Activated naive CD4-positive, alpha-beta T cell treated with anti-CD3 and anti-CD28 coated beads for 36 hours (primary cell): ENCODE measurements at regions of chr14 and their contacts with region 1.

Region 1: DNA sequence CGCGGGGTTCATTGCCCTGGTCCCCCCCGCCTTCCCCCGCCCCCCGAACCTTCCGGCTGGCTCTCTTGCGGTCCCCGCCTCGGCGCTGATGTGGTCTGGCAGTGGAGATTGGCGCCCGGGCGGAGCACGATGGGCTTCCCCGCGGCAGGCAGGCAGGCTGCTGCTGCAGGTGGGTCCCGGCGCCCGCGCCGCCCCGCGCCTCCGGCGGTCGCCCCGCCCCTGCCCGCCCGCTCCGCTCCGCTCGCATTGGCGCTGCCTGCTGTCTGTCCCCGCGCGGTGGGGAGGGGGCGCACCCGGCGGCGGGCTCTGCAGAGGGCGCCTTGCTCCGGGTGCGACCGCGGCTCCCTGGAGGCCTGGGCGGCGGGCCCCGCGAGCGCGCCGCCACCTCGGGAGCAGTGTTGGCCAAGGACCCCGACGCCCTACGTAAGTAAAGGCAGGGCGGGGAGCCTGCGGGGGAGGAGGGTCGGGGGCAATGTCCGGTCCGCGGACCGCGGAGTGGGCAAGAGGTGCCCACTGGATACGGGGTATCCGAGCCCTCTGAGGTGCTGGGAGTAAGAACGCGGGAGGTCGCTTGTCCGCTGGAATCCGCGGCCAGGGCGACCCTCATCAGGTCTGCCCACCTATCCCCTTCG is at the start of gene AKAP5:
- DNase-seq: peak; percentile 68
- H3K4me3 Mint-ChIP-seq: peak within 1 kb of the TSS; percentile 79
- H3K27ac Mint-ChIP-seq: peak within 1 kb of the TSS; percentile 46
- H3K4me1 Mint-ChIP-seq: peaks cover 37% of the 10 kb centered on the region
- H3K27me3 Mint-ChIP-seq: no peaks in the 10 kb centered on the region
- total RNA-seq, gene AKAP5: 0.57 to 0.69 TPM

Region 2: GRCh38 chr14:63981569-63981968 is 483.7 kb before region 1 on chr14:
- CTCF ChIA-PET with region 1: no interaction called
- intact Hi-C with region 1: no loop called
- DNase-seq: no peak
- H3K4me3 Mint-ChIP-seq: no peak overlapping the region
- H3K27ac Mint-ChIP-seq: no peak overlapping the region
- H3K4me1 Mint-ChIP-seq: no peaks in the 10 kb centered on the region
- H3K27me3 Mint-ChIP-seq: no peaks in the 10 kb centered on the region

Region 3: GRCh38 chr14:64387694-64388532 is 77.4 kb before region 1 on chr14 and contains the start of gene MTHFD1:
- CTCF ChIA-PET with region 1: no interaction called
- intact Hi-C with region 1: loop called (anchors 2 kb)
- DNase-seq: peak; percentile 99
- H3K4me3 Mint-ChIP-seq: peak within 1 kb of the TSS; percentile 92
- H3K27ac Mint-ChIP-seq: peak within 1 kb of the TSS; percentile 94
- H3K4me1 Mint-ChIP-seq: peaks cover 26% of the 10 kb centered on the region
- H3K27me3 Mint-ChIP-seq: no peaks in the 10 kb centered on the region
- total RNA-seq, gene MTHFD1: 240 to 247 TPM

Region 4: GRCh38 chr14:64444984-64445845 is 20.1 kb before region 1 on chr14:
- CTCF ChIA-PET with region 1: interaction called, 3 read pairs
- intact Hi-C with region 1: loop called (anchors 1 kb)
- DNase-seq: peak; percentile 55
- H3K4me3 Mint-ChIP-seq: no peak overlapping the region
- H3K27ac Mint-ChIP-seq: peak overlapping the region; percentile 75
- H3K4me1 Mint-ChIP-seq: peaks cover 32% of the 10 kb centered on the region
- H3K27me3 Mint-ChIP-seq: no peaks in the 10 kb centered on the region

Region 5: GRCh38 chr14:64510825-64511671 is 45.7 kb after region 1 on chr14:
- CTCF ChIA-PET with region 1: interaction called, 13 read pairs
- intact Hi-C with region 1: no loop called
- DNase-seq: peak; percentile 82
- H3K4me3 Mint-ChIP-seq: peak overlapping the region; percentile 34
- H3K27ac Mint-ChIP-seq: peak overlapping the region; percentile 57
- H3K4me1 Mint-ChIP-seq: peaks cover 75% of the 10 kb centered on the region
- H3K27me3 Mint-ChIP-seq: no peaks in the 10 kb centered on the region

Region 6: GRCh38 chr14:64540208-64541157 is 75.2 kb after region 1 on chr14 and contains the start of gene HSPA2:
- CTCF ChIA-PET with region 1: interaction called, 4 read pairs
- intact Hi-C with region 1: loop called (anchors 2 kb)
- DNase-seq: peak; percentile 97
- H3K4me3 Mint-ChIP-seq: peak within 1 kb of the TSS; percentile 92
- H3K27ac Mint-ChIP-seq: peak within 1 kb of the TSS; percentile 83
- H3K4me1 Mint-ChIP-seq: peaks cover 30% of the 10 kb centered on the region
- H3K27me3 Mint-ChIP-seq: peaks cover 22% of the 10 kb centered on the region
- total RNA-seq, gene HSPA2: 4.1 to 5.1 TPM